ENCODE measurements at regions of chr3 and their contacts with region 1.

Region 1: DNA sequence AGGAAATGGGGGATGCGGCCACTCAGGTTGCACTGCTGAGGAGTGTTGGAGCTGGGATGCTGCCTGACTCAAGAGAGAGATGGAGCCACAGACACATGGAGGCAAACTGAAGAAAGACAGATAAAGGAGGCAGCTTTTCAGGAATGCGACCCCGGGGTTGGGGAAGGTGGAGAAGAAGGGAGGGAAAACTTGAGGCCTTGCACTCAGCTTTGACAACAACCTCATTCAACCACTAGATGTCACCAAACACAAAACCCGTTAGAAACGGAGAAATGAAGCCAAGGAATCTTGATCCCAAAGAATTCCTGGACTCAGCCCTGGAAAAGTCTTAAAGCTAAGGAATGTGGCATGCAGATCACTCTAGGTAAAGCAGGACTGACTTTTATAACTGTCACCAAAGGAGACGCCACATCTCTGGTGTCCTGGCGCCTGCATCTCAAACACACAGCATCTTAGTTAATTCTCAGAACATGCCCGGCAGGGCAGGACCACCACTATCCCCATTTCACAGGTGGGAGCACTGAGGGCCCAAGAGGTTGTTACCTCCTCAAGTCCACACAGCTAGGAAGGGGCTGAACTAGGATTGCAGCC is 59.6 kb upstream of the LMCD1 start:
- DNase-seq: no peak
- ATAC-seq: peak; percentile 57

Region 2: DNA sequence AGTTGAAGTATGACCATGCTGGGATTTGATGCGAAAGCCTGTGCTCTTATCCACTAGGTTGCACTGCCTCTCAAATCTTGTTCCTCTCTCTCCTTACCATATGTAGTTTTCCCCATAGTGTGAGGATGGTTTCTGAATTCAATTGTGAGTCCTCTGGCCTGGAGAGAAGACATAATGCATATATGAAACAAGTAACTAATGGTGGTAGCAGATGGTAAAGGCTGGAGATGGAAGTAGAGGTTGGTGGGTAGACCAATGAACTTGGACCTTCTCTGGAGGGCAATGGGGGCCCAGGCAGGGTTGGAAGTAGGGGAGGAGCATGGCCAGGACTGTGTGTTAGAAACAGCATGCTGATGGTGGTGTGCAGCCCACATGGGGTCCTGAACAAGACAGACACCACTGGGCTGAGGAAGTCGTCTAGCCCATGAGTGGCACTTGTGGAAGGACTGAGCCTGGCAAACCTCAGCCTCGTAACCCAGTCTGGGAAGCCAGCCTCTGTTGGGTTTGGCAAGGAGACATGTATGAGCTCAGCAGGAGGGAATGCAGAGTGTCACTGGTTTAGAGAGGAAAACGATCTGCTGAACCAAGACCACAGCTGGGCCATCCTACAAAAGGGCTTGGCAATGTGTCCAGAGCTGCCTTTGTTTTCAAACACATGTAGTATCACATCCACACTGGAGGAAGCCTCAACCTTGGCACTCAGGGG is 41.0 kb after region 1 on chr3:
- intact Hi-C with region 1: loop called (anchors 5 kb)
- DNase-seq: peak; percentile 76
- ATAC-seq: peak; percentile 90

Region 3: DNA sequence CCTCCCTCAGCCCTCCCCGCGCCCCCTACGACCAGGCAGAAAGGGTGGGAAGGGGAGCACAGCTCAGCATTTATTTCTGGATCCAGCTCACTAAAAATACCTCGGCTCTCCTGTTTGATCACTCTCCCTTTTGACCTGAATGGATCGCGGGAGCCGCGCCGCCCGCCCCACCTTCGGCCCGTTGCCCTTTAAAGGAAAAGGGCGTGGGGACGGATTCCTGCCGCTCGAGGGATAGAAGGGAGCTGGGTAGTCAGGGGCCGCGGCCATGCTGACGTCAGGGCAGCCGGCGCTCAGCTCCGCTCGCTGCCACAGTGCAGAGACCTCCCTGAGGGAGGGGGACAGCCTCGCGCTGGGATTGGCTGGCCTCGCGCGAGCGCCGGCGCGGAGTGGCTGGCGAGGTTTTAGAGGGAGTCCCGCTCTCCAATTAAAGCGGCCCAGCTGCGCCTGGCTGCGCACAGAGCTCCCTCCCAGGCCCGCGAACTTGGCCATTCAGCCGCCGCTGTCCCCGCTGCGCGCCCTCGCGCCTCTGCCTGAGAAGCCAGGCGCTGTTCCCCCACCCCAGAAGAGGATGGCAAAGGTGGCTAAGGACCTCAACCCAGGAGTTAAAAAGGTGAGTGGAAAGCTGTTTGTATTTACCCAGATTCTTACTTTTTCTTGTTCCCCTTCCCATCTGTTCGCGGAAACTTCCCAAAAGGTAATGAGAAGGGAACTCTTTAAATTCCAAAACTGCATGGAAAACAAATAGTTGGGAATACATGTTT is 59.5 kb after region 1 on chr3 and contains the start of gene LMCD1:
- intact Hi-C with region 1: loop called (anchors 5 kb)
- DNase-seq: peak; percentile 96
- ATAC-seq: peak; percentile 99
- total RNA-seq, gene LMCD1: 48.1 TPM

Region 4: DNA sequence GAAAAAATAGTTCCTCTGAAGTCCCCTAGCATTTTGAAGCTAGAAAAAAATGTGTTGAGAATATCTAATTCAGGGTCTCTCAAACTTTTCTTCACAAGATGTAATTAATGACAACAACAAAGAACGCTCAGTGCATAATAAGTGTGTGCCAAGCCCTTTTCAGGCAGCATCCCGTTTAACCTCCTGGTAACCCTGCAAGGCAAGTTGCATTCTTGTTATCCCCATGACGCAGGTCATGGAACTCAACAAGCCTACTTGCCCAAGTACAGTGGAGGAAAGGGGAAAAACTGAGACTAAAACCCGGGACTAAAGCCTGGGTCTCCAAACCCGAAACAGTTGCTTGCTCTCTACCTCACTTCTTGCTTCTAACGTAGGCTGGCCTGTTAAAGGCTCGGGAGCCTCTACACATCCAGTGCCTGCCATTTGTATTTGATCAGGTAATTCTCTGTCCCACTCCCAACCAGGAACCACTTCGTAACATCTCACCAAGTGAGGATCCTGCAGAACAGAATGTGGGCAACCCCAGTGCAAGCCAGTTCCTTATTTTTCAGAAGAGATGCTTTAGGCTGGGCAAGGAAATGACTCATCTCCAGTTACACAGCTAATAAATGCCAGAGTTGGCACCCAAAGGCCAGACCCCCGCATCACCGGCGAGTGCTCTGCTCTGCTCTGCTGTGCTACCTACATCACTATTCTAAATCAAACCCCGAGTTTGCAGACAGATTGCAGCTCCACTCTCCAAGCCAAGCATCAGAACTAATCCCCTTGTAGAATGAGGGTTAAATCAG is 87.9 kb after region 1 on chr3:
- intact Hi-C with region 1: loop called (anchors 5 kb)
- DNase-seq: no peak
- ATAC-seq: no peak

Region 5: DNA sequence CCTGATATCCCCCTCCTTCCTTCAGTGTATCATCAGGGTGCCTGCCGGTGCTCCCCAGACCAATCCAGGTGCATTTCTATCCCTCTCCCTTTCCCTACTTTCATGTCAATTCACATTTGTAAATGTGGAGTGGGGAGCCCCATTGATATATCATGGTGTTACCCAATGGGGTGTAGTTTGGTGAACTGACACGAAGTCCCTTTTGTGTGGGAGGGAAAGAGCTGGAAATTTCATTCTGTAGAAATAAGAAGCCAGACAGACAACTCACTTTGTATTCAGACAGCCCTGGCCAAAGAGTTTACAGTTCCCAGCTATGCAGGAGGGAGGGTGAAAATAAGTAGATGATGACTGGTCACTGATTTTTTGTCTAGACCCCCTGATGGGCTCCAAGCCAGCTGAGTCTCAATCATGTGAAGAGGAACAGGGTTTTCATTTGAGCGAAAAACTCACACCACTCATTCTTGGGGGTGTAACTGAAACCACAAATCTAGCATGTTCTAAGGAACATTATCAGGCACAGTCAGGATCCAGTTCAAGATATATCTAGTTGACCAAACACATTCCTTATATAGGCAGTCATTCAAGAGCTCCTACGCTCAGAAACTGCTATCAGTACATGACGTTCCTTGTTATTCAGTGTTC is 118.4 kb after region 1 on chr3:
- intact Hi-C with region 1: loop called (anchors 5 kb)
- DNase-seq: no peak
- ATAC-seq: peak; percentile 58

Region 6: DNA sequence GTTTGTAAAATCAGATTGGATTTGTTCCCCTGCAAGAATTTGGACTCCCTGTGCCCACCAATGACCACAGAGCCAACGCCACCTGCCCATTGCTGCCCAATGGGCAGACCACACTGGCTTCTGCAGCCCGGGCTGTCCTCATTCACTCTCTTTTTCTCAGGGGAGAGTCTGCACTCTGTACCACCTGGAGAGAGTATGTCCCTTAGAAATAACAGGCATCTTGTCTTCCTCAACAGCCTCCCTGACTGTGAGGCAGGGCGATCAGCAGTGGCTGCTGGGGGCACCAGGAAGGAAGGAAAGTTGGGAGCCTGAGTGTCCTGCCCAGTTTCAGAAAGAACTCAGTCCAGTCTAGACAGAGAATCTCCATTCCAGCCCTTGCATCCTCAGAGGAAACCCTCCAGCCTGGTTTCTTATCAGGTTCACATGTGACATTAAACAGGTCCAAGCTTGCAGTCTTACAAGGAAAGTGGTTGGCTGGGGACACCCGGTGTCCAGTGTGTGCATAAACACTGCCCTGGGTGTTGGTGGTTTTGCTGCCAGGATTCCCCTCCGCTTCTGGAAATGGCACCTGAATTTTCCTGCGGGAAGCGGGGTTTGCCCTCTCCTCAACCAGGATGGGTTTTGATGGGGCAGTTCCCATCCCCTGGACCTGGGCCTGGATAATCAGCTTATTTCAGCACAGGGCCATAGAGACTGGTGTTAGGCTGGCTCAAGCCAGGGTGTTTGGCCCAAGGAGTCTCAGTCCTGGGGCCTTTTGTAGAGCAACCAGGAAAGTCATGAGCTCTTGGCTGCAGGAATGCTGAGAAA is 165.4 kb after region 1 on chr3:
- intact Hi-C with region 1: loop called (anchors 1 kb)
- DNase-seq: no peak
- ATAC-seq: peak; percentile 96

Region 7: GRCh38 chr3:8622873-8623691 is 181.0 kb after region 1 on chr3:
- intact Hi-C with region 1: loop called (anchors 1 kb)
- DNase-seq: peak; percentile 78
- ATAC-seq: peak; percentile 83

Measured in Right ventricle myocardium inferior (tissue), 1 donor.